GM12878 (cell line): ENCODE measurements at regions of chr2 and their contacts with region 1.

Region 1: GRCh38 chr2:97806738-97807618 is 93.6 kb downstream of the ZAP70 start:
- DNase-seq: peak; percentile 9
- ATAC-seq: peak; percentile 100
- H3K4me3 ChIP-seq: no peak overlapping the region
- H3K27ac ChIP-seq: no peak overlapping the region
- H3K4me1 ChIP-seq: no peaks in the 10 kb centered on the region
- H3K27me3 ChIP-seq: no peaks in the 10 kb centered on the region
- CTCF ChIP-seq: peak; percentile 93 to 95 (median 93); a peak in 5 of 6 replicates
- EP300 ChIP-seq: no peak
- POLR2A ChIP-seq: no peak
- RAD21 ChIP-seq: peak; percentile 99

Region 2: DNA sequence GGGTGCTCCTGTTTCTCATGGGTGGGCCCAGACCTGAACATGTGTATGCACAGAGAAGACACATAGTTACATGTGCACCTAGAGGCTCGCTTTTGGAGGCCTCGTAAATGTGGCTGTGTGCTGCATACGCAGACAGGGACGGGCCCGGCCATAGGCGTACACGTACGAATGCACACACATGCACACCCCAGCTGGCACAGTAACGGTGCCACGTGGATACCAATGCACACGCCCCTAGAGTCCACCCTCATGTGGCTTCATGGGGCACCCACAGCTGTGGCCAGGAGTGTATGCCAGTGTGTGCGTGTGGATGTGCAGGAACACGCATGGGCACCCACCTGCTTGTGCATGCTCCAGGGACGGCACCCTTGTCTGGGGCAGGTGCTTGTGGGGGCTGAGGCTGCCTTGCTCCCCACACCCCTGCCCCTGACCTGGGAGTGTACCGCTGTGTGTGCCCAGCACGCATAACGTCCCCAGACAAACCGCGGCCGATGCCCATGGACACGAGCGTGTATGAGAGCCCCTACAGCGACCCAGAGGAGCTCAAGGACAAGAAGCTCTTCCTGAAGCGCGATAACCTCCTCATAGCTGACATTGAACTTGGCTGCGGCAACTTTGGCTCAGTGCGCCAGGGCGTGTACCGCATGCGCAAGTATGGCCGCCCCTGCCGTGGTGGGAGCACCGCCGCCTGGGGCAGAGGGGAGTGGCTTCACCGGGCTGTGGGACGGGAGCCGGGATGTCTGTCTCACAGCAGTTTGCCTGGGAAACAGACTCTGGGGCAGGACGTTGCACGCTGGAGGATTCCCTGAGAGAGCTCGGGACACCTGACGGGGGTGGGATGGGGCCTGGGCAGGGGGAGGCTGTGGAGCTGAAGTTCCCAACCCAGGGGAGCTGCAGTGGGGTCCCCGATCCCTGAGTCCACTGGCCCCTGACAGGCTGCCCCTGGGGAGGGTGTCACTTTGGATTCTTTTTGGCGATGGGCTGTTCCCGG is 72.6 kb before region 1 on chr2:
- CTCF ChIA-PET with region 1: no interaction called
- POLR2A ChIA-PET with region 1: no interaction called
- RAD21 ChIA-PET with region 1: no interaction called
- SMC1A ChIA-PET with region 1: no interaction called
- in situ Hi-C with region 1: no loop called
- intact Hi-C with region 1: no loop called
- DNase-seq: no peak
- ATAC-seq: no peak
- H3K4me3 ChIP-seq: no peak overlapping the region
- H3K27ac ChIP-seq: no peak overlapping the region
- H3K4me1 ChIP-seq: no peaks in the 10 kb centered on the region
- H3K27me3 ChIP-seq: no peaks in the 10 kb centered on the region
- CTCF ChIP-seq: no peak
- EP300 ChIP-seq: no peak
- POLR2A ChIP-seq: no peak
- RAD21 ChIP-seq: no peak

Region 3: DNA sequence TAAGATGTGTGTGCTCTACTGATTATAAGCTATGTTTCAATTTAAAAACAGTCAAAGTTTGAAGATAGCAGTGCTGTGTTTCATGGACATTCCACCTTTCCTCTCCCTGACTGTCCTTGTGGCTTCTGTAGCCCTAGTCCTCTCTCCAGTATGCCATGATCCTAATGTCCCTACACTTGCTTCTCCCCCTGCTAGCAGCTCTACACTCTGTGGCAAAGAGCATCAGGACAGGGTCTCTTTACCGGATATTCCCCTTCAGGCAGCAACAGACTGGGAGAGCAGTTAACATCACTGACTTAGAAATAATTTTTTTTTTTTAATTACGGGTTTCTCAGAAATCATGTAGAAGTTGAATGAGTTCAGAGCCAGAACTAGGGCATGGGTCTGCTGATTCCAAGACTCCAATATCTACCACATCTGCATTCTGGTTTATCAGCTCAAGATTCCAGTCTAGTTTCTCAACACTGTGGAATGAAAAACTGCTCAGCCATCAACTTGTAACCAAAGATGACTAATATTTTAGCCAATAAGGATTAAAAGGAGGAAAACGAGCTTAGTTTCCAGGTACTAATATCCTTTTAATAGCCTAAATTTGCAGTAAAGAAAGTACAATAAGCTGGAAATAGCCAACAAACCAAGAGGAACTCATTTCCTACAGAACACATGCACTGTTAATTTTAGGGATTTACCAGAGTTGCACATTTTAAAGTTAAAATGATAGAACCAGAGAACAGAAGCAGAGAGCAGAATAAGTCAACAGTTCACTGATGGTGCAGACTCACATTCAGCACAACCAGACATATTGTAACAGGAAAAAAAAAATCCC is 143.6 kb after region 1 on chr2:
- CTCF ChIA-PET with region 1: interaction called, 10 read pairs
- POLR2A ChIA-PET with region 1: no interaction called
- RAD21 ChIA-PET with region 1: interaction called, 6 read pairs
- SMC1A ChIA-PET with region 1: interaction called, 5 read pairs
- in situ Hi-C with region 1: no loop called
- intact Hi-C with region 1: no loop called
- DNase-seq: no peak
- ATAC-seq: no peak
- H3K4me3 ChIP-seq: no peak overlapping the region
- H3K27ac ChIP-seq: no peak overlapping the region
- H3K4me1 ChIP-seq: peaks cover 38% of the 10 kb centered on the region
- H3K27me3 ChIP-seq: no peaks in the 10 kb centered on the region
- CTCF ChIP-seq: no peak
- EP300 ChIP-seq: no peak
- POLR2A ChIP-seq: no peak
- RAD21 ChIP-seq: no peak

Region 4: GRCh38 chr2:98026927-98027522 is 220.0 kb after region 1 on chr2:
- CTCF ChIA-PET with region 1: interaction called, 4 read pairs
- POLR2A ChIA-PET with region 1: no interaction called
- RAD21 ChIA-PET with region 1: interaction called, 6 read pairs
- SMC1A ChIA-PET with region 1: interaction called, 6 read pairs
- in situ Hi-C with region 1: no loop called
- intact Hi-C with region 1: loop called (anchors 5 kb)
- DNase-seq: peak; percentile 98
- ATAC-seq: peak; percentile 93
- H3K4me3 ChIP-seq: peak overlapping the region; percentile 53
- H3K27ac ChIP-seq: peak overlapping the region; percentile 80
- H3K4me1 ChIP-seq: peaks cover 35% of the 10 kb centered on the region
- H3K27me3 ChIP-seq: no peaks in the 10 kb centered on the region
- CTCF ChIP-seq: no peak
- EP300 ChIP-seq: peak; percentile 87 to 93
- POLR2A ChIP-seq: no peak
- RAD21 ChIP-seq: no peak

Region 5: GRCh38 chr2:98157557-98157956 is 350.6 kb after region 1 on chr2:
- CTCF ChIA-PET with region 1: interaction called, 10 read pairs
- POLR2A ChIA-PET with region 1: interaction called, 3 read pairs
- RAD21 ChIA-PET with region 1: interaction called, 6 read pairs
- SMC1A ChIA-PET with region 1: interaction called, 7 read pairs
- in situ Hi-C with region 1: loop called (anchors 25 kb)
- intact Hi-C with region 1: loop called (anchors 2 kb)
- DNase-seq: no peak
- ATAC-seq: peak; percentile 74
- H3K4me3 ChIP-seq: no peak overlapping the region
- H3K27ac ChIP-seq: no peak overlapping the region
- H3K4me1 ChIP-seq: no peaks in the 10 kb centered on the region
- H3K27me3 ChIP-seq: no peaks in the 10 kb centered on the region; a peak in 1 of 4 replicates
- CTCF ChIP-seq: peak; percentile 25 to 49 (median 33); a peak in 3 of 6 replicates
- EP300 ChIP-seq: no peak
- POLR2A ChIP-seq: no peak
- RAD21 ChIP-seq: peak; percentile 44; the same call in 1 of the 2 replicates

Region 6: DNA sequence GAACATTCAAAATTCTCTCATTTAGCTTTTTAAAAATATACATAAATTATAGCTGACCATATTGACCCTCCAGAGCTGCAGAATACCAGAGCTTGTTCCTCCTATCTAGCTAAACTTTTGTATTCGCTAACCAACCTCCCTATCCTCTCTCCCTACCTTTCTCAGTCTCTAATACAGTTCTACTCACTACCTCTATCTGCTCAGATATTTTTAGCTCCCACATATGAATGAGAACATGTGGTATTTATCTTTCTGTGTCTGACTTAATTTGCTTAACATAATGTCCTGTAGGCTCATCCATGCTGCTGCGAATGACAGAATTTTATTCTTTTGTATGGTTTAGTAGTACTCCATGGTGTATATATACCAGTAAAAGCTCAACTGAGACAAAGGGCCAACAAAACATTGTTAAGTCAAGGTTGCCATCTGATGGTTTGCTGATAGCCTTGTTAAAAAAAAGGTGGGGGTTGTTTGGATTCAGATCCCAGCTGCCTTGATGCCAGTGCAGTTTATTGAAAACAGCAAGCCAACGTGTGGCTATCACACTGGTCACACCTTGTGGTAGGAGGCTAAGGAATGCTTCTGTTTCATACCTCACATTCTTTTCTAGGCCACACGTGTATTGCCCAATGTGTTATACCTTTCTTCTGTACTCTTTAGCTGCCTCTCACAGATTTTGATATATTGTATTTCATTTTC is 381.5 kb after region 1 on chr2:
- CTCF ChIA-PET with region 1: interaction called, 16 read pairs
- POLR2A ChIA-PET with region 1: no interaction called
- RAD21 ChIA-PET with region 1: interaction called, 10 read pairs
- SMC1A ChIA-PET with region 1: interaction called, 4 read pairs
- in situ Hi-C with region 1: no loop called
- intact Hi-C with region 1: loop called (anchors 5 kb)
- DNase-seq: no peak
- ATAC-seq: no peak
- H3K4me3 ChIP-seq: no peak overlapping the region
- H3K27ac ChIP-seq: no peak overlapping the region
- H3K4me1 ChIP-seq: no peaks in the 10 kb centered on the region; the same call in 1 of the 2 replicates
- H3K27me3 ChIP-seq: no peaks in the 10 kb centered on the region; a peak in 1 of 4 replicates
- CTCF ChIP-seq: peak in 2 of 3 experiments; percentile 21 to 34; a peak in 3 of 6 replicates
- EP300 ChIP-seq: no peak
- POLR2A ChIP-seq: no peak
- RAD21 ChIP-seq: peak; percentile 51

Region 7: GRCh38 chr2:98379672-98380535 is 572.9 kb after region 1 on chr2:
- CTCF ChIA-PET with region 1: interaction called, 17 read pairs
- POLR2A ChIA-PET with region 1: no interaction called
- RAD21 ChIA-PET with region 1: interaction called, 13 read pairs
- SMC1A ChIA-PET with region 1: interaction called, 25 read pairs
- in situ Hi-C with region 1: loop called (anchors 5 kb)
- intact Hi-C with region 1: loop called (anchors 1 kb)
- DNase-seq: no peak
- ATAC-seq: no peak
- H3K4me3 ChIP-seq: no peak overlapping the region
- H3K27ac ChIP-seq: no peak overlapping the region
- H3K4me1 ChIP-seq: no peaks in the 10 kb centered on the region
- H3K27me3 ChIP-seq: peaks cover 0 to 7% of the 10 kb centered on the region in 2 experiments; a peak in 3 of 4 replicates
- CTCF ChIP-seq: no peak
- EP300 ChIP-seq: no peak
- POLR2A ChIP-seq: no peak
- RAD21 ChIP-seq: no peak